GM12878 (cell line): ENCODE measurements at regions of chr6 and their contacts with region 1.

Region 1: DNA sequence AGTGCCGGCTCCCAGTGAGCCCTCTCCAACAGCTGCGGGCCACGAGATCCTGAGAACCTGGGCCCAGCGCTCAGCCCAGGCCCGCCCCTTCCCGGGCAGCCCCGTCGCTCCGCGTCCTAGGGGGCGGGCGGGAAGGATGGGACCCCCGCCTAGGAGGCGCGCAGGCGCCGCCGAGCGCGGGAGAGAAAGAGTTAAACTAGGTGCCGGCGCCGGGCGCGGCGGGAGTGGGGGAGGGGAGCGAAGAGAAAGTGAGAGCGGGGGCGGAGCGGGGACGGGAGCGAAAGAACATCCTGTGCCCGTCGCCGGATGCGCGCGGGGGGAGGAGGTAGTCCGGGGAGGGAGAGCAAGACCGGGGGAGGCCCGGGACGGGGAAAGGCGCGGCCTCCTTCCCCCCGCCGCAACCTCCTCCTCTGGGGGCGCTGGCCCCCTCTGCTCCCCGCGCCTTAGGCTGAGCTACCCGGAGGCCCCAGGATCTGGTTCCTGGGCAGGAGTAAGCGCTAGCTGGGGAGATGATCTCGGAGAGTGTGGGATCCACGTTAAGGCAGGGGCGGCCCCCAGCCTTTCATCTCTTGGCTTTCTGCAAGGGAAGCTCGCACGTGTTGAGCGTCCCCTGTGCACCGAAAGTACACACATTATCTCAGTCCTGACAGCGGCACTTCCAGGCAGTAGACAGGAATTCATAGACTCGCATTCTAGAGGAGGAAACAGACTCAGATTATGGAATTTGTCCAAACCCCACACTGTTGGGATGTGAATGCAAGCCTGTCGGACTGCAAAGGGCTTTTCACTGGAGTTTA is 4.9 kb upstream of the ARMC12 start:
- DNase-seq: peak; percentile 67
- ATAC-seq: peak; percentile 70
- H3K4me3 ChIP-seq: peak overlapping the region; percentile 86
- H3K27ac ChIP-seq: peak overlapping the region; percentile 89
- H3K4me1 ChIP-seq: peaks cover 44% of the 10 kb centered on the region
- H3K27me3 ChIP-seq: no peaks in the 10 kb centered on the region
- CTCF ChIP-seq: peak in 2 of 3 experiments; percentile 1 to 22; a peak in 1 of 6 replicates
- EP300 ChIP-seq: peak; percentile 33 to 68; a peak in 1 of 4 replicates
- POLR2A ChIP-seq: peak; percentile 70
- RAD21 ChIP-seq: no peak

Region 2: GRCh38 chr6:35342258-35343091 is 389.5 kb before region 1 on chr6 and contains the start of gene PPARD:
- CTCF ChIA-PET with region 1: interaction called, 3 read pairs
- POLR2A ChIA-PET with region 1: no interaction called
- RAD21 ChIA-PET with region 1: interaction called, 3 read pairs
- SMC1A ChIA-PET with region 1: no interaction called
- in situ Hi-C with region 1: no loop called
- intact Hi-C with region 1: loop called (anchors 10 kb)
- DNase-seq: peak; percentile 71
- ATAC-seq: peak; percentile 97
- H3K4me3 ChIP-seq: peak within 1 kb of the TSS; percentile 84
- H3K27ac ChIP-seq: peak within 1 kb of the TSS; percentile 70
- H3K4me1 ChIP-seq: no peaks in the 10 kb centered on the region; the same call in 1 of the 2 replicates
- H3K27me3 ChIP-seq: no peaks in the 10 kb centered on the region
- CTCF ChIP-seq: peak; percentile 97 to 99 (median 97); a peak in 5 of 6 replicates
- EP300 ChIP-seq: no peak
- POLR2A ChIP-seq: 0 out of 2 replicates have a peak, but pooled peaks have one; percentile 41
- RAD21 ChIP-seq: peak; percentile 100
- polyA plus RNA-seq, gene PPARD: 0.05 to 0.38 TPM

Region 3: DNA sequence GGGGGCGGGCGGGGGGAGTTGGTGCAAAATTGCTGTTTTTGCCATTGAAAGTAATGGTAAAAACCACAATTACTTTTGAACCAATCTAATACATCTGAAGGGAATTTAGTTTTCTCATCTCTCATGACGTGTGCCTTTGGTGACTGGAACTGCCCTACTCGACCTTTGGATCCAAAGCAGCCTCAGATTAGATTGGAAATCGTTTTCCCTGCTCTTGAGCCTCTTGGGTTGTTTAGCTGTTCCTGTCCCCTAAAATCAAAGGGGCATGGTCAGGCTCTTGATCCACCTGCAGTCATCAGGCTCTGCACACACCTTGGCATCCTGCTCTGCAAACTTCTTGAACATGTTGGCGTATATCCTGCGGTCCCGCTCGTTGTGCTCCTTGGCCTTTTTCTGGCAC is 155.3 kb before region 1 on chr6:
- CTCF ChIA-PET with region 1: interaction called, 374 read pairs
- POLR2A ChIA-PET with region 1: no interaction called
- RAD21 ChIA-PET with region 1: interaction called, 91 read pairs
- SMC1A ChIA-PET with region 1: interaction called, 149 read pairs
- in situ Hi-C with region 1: loop called (anchors 5 kb)
- intact Hi-C with region 1: no loop called
- DNase-seq: no peak
- ATAC-seq: no peak
- H3K4me3 ChIP-seq: no peak overlapping the region
- H3K27ac ChIP-seq: no peak overlapping the region
- H3K4me1 ChIP-seq: no peaks in the 10 kb centered on the region
- H3K27me3 ChIP-seq: no peaks in the 10 kb centered on the region
- CTCF ChIP-seq: no peak
- EP300 ChIP-seq: no peak
- POLR2A ChIP-seq: no peak
- RAD21 ChIP-seq: no peak

Region 4: GRCh38 chr6:35611240-35611639 is 120.7 kb before region 1 on chr6:
- CTCF ChIA-PET with region 1: interaction called, 10 read pairs
- POLR2A ChIA-PET with region 1: no interaction called
- RAD21 ChIA-PET with region 1: interaction called, 5 read pairs
- SMC1A ChIA-PET with region 1: interaction called, 12 read pairs
- in situ Hi-C with region 1: no loop called
- intact Hi-C with region 1: no loop called
- DNase-seq: no peak
- ATAC-seq: no peak
- H3K4me3 ChIP-seq: no peak overlapping the region
- H3K27ac ChIP-seq: no peak overlapping the region
- H3K4me1 ChIP-seq: 0 out of 2 replicates have a peak, but pooled peaks cover under 1% of the 10 kb centered on the region
- H3K27me3 ChIP-seq: no peaks in the 10 kb centered on the region
- CTCF ChIP-seq: no peak
- EP300 ChIP-seq: no peak
- POLR2A ChIP-seq: no peak
- RAD21 ChIP-seq: no peak

Region 5: GRCh38 chr6:35663447-35664235 is 68.3 kb before region 1 on chr6:
- CTCF ChIA-PET with region 1: interaction called, 54 read pairs
- POLR2A ChIA-PET with region 1: interaction called, 4 read pairs
- RAD21 ChIA-PET with region 1: interaction called, 12 read pairs
- SMC1A ChIA-PET with region 1: interaction called, 17 read pairs
- in situ Hi-C with region 1: no loop called
- intact Hi-C with region 1: loop called (anchors 5 kb)
- DNase-seq: no peak
- ATAC-seq: peak; percentile 50
- H3K4me3 ChIP-seq: no peak overlapping the region
- H3K27ac ChIP-seq: peak overlapping the region; percentile 32; the same call in 1 of the 2 replicates
- H3K4me1 ChIP-seq: peaks cover 17% of the 10 kb centered on the region
- H3K27me3 ChIP-seq: no peaks in the 10 kb centered on the region
- CTCF ChIP-seq: no peak
- EP300 ChIP-seq: no peak
- POLR2A ChIP-seq: no peak
- RAD21 ChIP-seq: no peak

Region 6: DNA sequence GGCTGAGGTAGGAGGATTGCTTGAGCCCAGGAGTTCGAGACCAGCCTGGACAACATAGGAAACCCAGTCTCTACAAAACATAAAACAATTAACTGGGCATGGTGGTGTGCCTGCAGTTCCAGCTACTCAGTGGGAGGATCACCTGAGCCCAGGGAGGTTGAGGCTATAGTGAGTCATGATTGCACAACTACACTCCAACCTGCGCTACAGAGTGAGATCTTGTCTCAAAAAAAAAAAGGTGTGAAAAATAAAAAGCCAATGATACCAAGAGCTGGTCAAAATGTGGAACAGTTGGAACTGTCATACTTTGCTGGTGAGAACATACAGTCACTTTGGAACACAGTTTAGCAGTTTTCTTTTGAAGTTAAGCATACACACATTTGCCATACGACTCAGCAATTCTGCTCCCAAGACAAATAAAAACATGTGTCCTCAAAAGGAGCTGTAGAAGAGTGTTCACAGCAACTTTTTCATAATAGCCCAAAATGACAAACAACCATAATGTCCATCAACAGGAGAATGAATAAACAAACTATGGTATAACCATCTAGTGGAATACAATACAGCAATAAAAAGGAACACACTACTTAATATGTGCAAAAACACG is 21.6 kb before region 1 on chr6:
- CTCF ChIA-PET with region 1: interaction called, 15 read pairs
- POLR2A ChIA-PET with region 1: interaction called, 13 read pairs
- RAD21 ChIA-PET with region 1: interaction called, 8 read pairs
- SMC1A ChIA-PET with region 1: interaction called, 4 read pairs
- in situ Hi-C with region 1: no loop called
- intact Hi-C with region 1: no loop called
- DNase-seq: no peak
- ATAC-seq: no peak; the same call in 2 of the 3 replicates
- H3K4me3 ChIP-seq: no peak overlapping the region
- H3K27ac ChIP-seq: no peak overlapping the region
- H3K4me1 ChIP-seq: peaks cover 8% of the 10 kb centered on the region
- H3K27me3 ChIP-seq: no peaks in the 10 kb centered on the region
- CTCF ChIP-seq: no peak
- EP300 ChIP-seq: no peak
- POLR2A ChIP-seq: no peak
- RAD21 ChIP-seq: no peak

Region 7: GRCh38 chr6:35810971-35811497 is 79.1 kb after region 1 on chr6:
- CTCF ChIA-PET with region 1: no interaction called
- POLR2A ChIA-PET with region 1: no interaction called
- RAD21 ChIA-PET with region 1: no interaction called
- SMC1A ChIA-PET with region 1: no interaction called
- in situ Hi-C with region 1: no loop called
- intact Hi-C with region 1: no loop called
- DNase-seq: no peak
- ATAC-seq: peak; percentile 72
- H3K4me3 ChIP-seq: no peak overlapping the region
- H3K27ac ChIP-seq: no peak overlapping the region
- H3K4me1 ChIP-seq: no peaks in the 10 kb centered on the region
- H3K27me3 ChIP-seq: no peaks in the 10 kb centered on the region
- CTCF ChIP-seq: no peak
- EP300 ChIP-seq: no peak
- POLR2A ChIP-seq: no peak
- RAD21 ChIP-seq: no peak

Region 8: DNA sequence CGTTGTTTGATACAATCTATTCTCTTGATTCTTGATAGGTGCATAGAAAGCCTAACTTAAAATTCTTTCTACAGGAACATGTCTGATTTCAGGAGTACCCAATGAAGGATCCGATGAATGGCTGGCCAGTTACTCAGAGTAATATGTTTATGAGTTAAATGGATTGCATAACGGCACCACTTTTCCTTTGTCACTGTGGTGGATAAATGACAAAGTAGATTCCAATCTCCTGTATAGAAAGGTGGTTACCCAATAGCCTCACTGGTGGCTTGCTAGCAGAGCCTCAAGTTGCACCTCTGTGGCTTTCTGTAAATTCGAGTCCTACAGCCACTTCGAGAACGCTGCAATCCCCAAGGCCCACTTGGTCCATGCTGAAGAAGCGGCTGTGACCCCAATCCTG is 101.6 kb after region 1 on chr6:
- CTCF ChIA-PET with region 1: no interaction called
- POLR2A ChIA-PET with region 1: no interaction called
- RAD21 ChIA-PET with region 1: no interaction called
- SMC1A ChIA-PET with region 1: no interaction called
- in situ Hi-C with region 1: no loop called
- intact Hi-C with region 1: no loop called
- DNase-seq: no peak
- ATAC-seq: no peak
- H3K4me3 ChIP-seq: no peak overlapping the region
- H3K27ac ChIP-seq: no peak overlapping the region
- H3K4me1 ChIP-seq: no peaks in the 10 kb centered on the region
- H3K27me3 ChIP-seq: no peaks in the 10 kb centered on the region
- CTCF ChIP-seq: no peak
- EP300 ChIP-seq: no peak
- POLR2A ChIP-seq: no peak
- RAD21 ChIP-seq: no peak

Region 9: GRCh38 chr6:36224904-36225461 is 493.0 kb after region 1 on chr6:
- CTCF ChIA-PET with region 1: no interaction called
- POLR2A ChIA-PET with region 1: no interaction called
- RAD21 ChIA-PET with region 1: no interaction called
- SMC1A ChIA-PET with region 1: no interaction called
- in situ Hi-C with region 1: no loop called
- intact Hi-C with region 1: no loop called
- DNase-seq: no peak
- ATAC-seq: no peak
- H3K4me3 ChIP-seq: no peak overlapping the region
- H3K27ac ChIP-seq: no peak overlapping the region
- H3K4me1 ChIP-seq: no peaks in the 10 kb centered on the region
- H3K27me3 ChIP-seq: no peaks in the 10 kb centered on the region
- CTCF ChIP-seq: no peak
- EP300 ChIP-seq: no peak
- POLR2A ChIP-seq: no peak
- RAD21 ChIP-seq: no peak